SK-N-SH (cell line): ENCODE measurements at regions of chr4 and their contacts with region 1.

Region 1: DNA sequence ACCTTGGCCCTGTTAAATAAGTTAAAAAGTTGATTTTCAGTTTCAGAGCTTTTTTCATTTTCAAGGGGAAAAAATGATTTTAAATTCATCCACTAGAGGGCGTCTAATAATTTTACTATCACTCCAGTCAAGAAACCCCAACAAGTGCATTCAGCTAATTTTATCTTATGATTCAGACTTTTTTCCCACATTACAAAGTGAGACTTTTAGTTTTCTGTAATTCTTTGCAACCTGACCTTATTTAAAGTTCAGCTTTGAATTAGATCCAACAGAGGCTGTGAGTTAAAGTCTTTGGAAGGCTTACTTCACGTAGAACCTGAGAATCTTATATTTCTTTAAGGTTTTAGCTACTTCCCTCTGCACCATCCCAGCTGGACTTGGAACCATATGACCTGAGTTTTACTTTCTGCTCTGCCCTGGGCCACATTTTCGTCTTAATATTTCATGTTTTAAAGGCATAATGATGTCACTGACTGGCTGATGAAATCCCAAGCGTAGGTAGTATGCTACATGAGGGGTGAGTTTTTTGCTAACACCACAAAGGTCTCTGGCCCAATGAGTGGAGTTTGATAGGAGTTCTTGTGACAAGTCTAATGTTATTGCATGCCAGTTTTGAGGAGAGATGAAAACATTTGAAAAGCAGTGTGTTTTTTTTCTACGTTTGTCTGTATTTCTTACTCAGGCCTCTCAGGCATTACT is 7.2 kb downstream of the GNRHR start:
- DNase-seq: peak; percentile 17
- H3K4me3 ChIP-seq: peak overlapping the region in 1 of 2 experiments; percentile 8; a peak in 1 of 4 replicates
- H3K27ac ChIP-seq: peak overlapping the region in 1 of 2 experiments; percentile 40; a peak in 2 of 4 replicates
- H3K4me1 ChIP-seq: no peaks in the 10 kb centered on the region; a peak in 2 of 4 replicates
- H3K27me3 ChIP-seq: no peaks in the 10 kb centered on the region
- CTCF ChIP-seq: peak; percentile 75
- EP300 ChIP-seq: no peak
- RAD21 ChIP-seq: peak; percentile 48

Region 2: DNA sequence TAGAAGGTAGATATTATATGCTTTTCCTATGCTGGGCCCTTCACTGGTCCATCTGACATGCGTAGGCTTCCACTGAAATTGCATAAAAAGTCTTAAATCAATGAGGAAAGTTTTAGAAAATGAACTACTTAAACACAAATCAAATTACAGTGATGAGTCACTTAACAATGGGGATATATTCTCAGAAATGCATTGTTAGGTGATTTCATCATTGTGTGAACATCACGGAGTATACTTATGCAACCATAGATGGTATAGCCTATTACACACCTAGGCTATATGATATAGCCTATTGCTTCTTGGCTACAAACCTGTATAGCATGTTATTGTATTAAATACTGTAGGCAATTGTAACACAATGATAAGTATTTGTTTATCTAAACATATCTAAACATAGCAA is 178.1 kb before region 1 on chr4:
- CTCF ChIA-PET with region 1: no interaction called
- POLR2A ChIA-PET with region 1: no interaction called
- DNase-seq: no peak
- H3K4me3 ChIP-seq: no peak overlapping the region
- H3K27ac ChIP-seq: no peak overlapping the region
- H3K4me1 ChIP-seq: no peaks in the 10 kb centered on the region; a peak in 1 of 4 replicates
- H3K27me3 ChIP-seq: no peaks in the 10 kb centered on the region
- CTCF ChIP-seq: no peak
- EP300 ChIP-seq: no peak
- RAD21 ChIP-seq: no peak

Region 3: GRCh38 chr4:67727124-67727850 is 19.7 kb before region 1 on chr4:
- CTCF ChIA-PET with region 1: interaction called, 41 read pairs
- POLR2A ChIA-PET with region 1: no interaction called
- DNase-seq: no peak
- H3K4me3 ChIP-seq: peak overlapping the region in 1 of 2 experiments; percentile 31; a peak in 1 of 4 replicates
- H3K27ac ChIP-seq: peak overlapping the region in 1 of 2 experiments; percentile 76; a peak in 2 of 4 replicates
- H3K4me1 ChIP-seq: peaks cover 0 to 1% of the 10 kb centered on the region in 2 experiments; a peak in 2 of 4 replicates
- H3K27me3 ChIP-seq: no peaks in the 10 kb centered on the region
- CTCF ChIP-seq: no peak
- EP300 ChIP-seq: peak in 1 of 2 experiments; percentile 70; a peak in 2 of 4 replicates
- RAD21 ChIP-seq: no peak

Region 4: GRCh38 chr4:67736262-67736661 is 10.7 kb before region 1 on chr4:
- CTCF ChIA-PET with region 1: interaction called, 41 read pairs
- POLR2A ChIA-PET with region 1: no interaction called
- DNase-seq: no peak
- H3K4me3 ChIP-seq: no peak overlapping the region
- H3K27ac ChIP-seq: no peak overlapping the region
- H3K4me1 ChIP-seq: no peaks in the 10 kb centered on the region
- H3K27me3 ChIP-seq: no peaks in the 10 kb centered on the region
- CTCF ChIP-seq: no peak
- EP300 ChIP-seq: no peak
- RAD21 ChIP-seq: no peak

Region 5: GRCh38 chr4:67762086-67762485 is 15.1 kb after region 1 on chr4:
- CTCF ChIA-PET with region 1: interaction called, 33 read pairs
- POLR2A ChIA-PET with region 1: no interaction called
- DNase-seq: no peak
- H3K4me3 ChIP-seq: peak overlapping the region in 1 of 2 experiments; percentile 40; a peak in 3 of 4 replicates
- H3K27ac ChIP-seq: 0 out of 4 replicates have a peak overlapping the region, but pooled peaks of 1 of the 2 experiments have one; percentile 15
- H3K4me1 ChIP-seq: no peaks in the 10 kb centered on the region
- H3K27me3 ChIP-seq: no peaks in the 10 kb centered on the region
- CTCF ChIP-seq: no peak
- EP300 ChIP-seq: no peak
- RAD21 ChIP-seq: no peak

Region 6: GRCh38 chr4:67770422-67770821 is 23.5 kb after region 1 on chr4:
- CTCF ChIA-PET with region 1: interaction called, 33 read pairs
- POLR2A ChIA-PET with region 1: no interaction called
- DNase-seq: no peak
- H3K4me3 ChIP-seq: no peak overlapping the region
- H3K27ac ChIP-seq: no peak overlapping the region; a peak in 1 of 4 replicates
- H3K4me1 ChIP-seq: peaks cover 0 to 2% of the 10 kb centered on the region in 2 experiments; a peak in 1 of 4 replicates
- H3K27me3 ChIP-seq: no peaks in the 10 kb centered on the region
- CTCF ChIP-seq: no peak
- EP300 ChIP-seq: no peak
- RAD21 ChIP-seq: no peak

Region 7: DNA sequence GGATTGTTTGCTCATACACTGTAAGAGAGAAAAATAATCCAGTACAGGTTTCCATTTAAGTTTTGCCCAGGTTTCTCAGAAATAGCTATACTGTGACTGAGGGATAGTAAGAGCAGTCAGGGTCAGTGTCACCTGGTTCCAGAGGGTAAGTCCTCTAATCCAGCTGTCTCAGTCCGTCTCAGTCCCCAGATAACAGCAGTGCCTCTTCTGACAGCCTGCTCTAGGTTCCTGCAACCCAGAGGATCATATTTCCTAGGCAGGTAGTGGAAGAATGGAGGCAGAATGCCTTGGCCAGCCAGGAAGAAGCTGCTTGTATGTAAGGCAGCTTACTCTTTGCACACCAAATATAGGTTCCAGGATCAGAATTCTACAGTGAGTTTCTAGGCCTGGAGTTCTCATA is 29.8 kb after region 1 on chr4:
- CTCF ChIA-PET with region 1: interaction called, 10 read pairs
- POLR2A ChIA-PET with region 1: no interaction called
- DNase-seq: no peak
- H3K4me3 ChIP-seq: no peak overlapping the region
- H3K27ac ChIP-seq: no peak overlapping the region
- H3K4me1 ChIP-seq: peaks cover 2 to 5% of the 10 kb centered on the region in 2 experiments; a peak in 1 of 4 replicates
- H3K27me3 ChIP-seq: no peaks in the 10 kb centered on the region
- CTCF ChIP-seq: no peak
- EP300 ChIP-seq: no peak
- RAD21 ChIP-seq: no peak

Region 8: GRCh38 chr4:67892905-67893304 is 146.0 kb after region 1 on chr4:
- CTCF ChIA-PET with region 1: no interaction called
- POLR2A ChIA-PET with region 1: no interaction called
- DNase-seq: no peak
- H3K4me3 ChIP-seq: no peak overlapping the region
- H3K27ac ChIP-seq: no peak overlapping the region
- H3K4me1 ChIP-seq: no peaks in the 10 kb centered on the region
- H3K27me3 ChIP-seq: no peaks in the 10 kb centered on the region
- CTCF ChIP-seq: peak; percentile 28; the same call in 1 of the 2 replicates
- EP300 ChIP-seq: no peak
- RAD21 ChIP-seq: no peak